Caco-2 (cell line): ENCODE measurements at regions of chr22 and their contacts with region 1.

Region 1: DNA sequence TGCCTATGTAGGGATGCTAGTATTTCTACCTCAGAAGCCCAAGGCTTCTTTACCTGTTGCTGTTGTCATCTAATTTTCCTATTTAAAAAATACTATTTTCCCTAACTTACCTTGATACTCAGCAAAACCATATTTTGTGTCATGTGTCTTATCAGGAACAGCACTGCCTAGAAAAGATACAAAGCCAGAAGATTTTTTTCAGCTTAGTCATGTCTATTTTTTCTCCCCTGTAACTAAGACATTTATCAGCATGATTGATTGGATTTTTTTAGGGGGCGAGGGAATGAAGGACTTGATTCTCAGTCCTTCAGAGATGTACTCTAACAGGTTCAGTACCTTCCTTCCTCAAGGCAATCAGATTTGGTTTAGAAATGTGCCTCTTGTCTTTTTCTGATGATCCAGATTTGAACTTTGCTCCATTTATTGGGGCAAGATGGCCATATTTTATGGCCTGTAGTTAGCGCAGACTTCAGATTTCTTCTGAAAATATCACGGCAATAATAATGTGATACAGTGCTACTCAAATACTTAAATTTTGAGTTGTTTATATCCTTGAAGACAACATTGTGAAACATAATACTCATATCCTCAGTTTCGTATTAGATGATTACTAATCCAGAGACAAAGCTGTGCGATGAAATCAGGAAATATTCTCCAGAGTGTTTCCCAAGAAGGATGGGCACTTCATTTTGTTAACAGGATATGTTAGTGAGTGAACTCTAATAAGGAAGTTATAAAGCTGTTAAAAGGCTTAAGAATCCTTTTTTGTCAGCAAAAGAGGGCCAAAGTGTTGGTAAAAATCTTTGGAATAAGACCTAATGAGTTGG is 3.8 kb upstream of the PIK3IP1 start:
- DNase-seq: no peak
- H3K4me3 ChIP-seq: no peak overlapping the region
- H3K4me3 Mint-ChIP-seq: no peak overlapping the region
- H3K27ac Mint-ChIP-seq: no peak overlapping the region
- H3K4me1 ChIP-seq: peaks cover 12% of the 10 kb centered on the region; the same call in 1 of the 2 replicates
- H3K4me1 Mint-ChIP-seq: peaks cover 26% of the 10 kb centered on the region
- H3K27me3 ChIP-seq: no peaks in the 10 kb centered on the region
- H3K27me3 Mint-ChIP-seq: no peaks in the 10 kb centered on the region
- CTCF ChIP-seq: no peak

Region 2: GRCh38 chr22:31148953-31149627 is 147.0 kb before region 1 on chr22:
- CTCF ChIA-PET with region 1: no interaction called
- POLR2A ChIA-PET with region 1: no interaction called
- intact Hi-C with region 1: no loop called
- DNase-seq: peak; percentile 81 to 82
- H3K4me3 ChIP-seq: no peak overlapping the region
- H3K4me3 Mint-ChIP-seq: no peak overlapping the region
- H3K27ac Mint-ChIP-seq: no peak overlapping the region
- H3K4me1 ChIP-seq: no peaks in the 10 kb centered on the region
- H3K4me1 Mint-ChIP-seq: no peaks in the 10 kb centered on the region
- H3K27me3 ChIP-seq: no peaks in the 10 kb centered on the region
- H3K27me3 Mint-ChIP-seq: no peaks in the 10 kb centered on the region
- CTCF ChIP-seq: peak; percentile 93 to 97

Region 3: GRCh38 chr22:31281733-31282132 is 14.3 kb before region 1 on chr22:
- CTCF ChIA-PET with region 1: no interaction called
- POLR2A ChIA-PET with region 1: no interaction called
- intact Hi-C with region 1: no loop called
- DNase-seq: no peak
- H3K4me3 ChIP-seq: no peak overlapping the region
- H3K4me3 Mint-ChIP-seq: no peak overlapping the region
- H3K27ac Mint-ChIP-seq: no peak overlapping the region
- H3K4me1 ChIP-seq: no peaks in the 10 kb centered on the region
- H3K4me1 Mint-ChIP-seq: no peaks in the 10 kb centered on the region
- H3K27me3 ChIP-seq: no peaks in the 10 kb centered on the region
- H3K27me3 Mint-ChIP-seq: no peaks in the 10 kb centered on the region
- CTCF ChIP-seq: no peak

Region 4: GRCh38 chr22:31313366-31314147 is 17.5 kb after region 1 on chr22:
- CTCF ChIA-PET with region 1: interaction called, 20 read pairs
- POLR2A ChIA-PET with region 1: interaction called, 11 read pairs
- intact Hi-C with region 1: loop called (anchors 1 kb)
- DNase-seq: peak; percentile 66 to 74
- H3K4me3 ChIP-seq: no peak overlapping the region
- H3K4me3 Mint-ChIP-seq: no peak overlapping the region
- H3K27ac Mint-ChIP-seq: peak overlapping the region; percentile 65
- H3K4me1 ChIP-seq: no peaks in the 10 kb centered on the region
- H3K4me1 Mint-ChIP-seq: peaks cover 7% of the 10 kb centered on the region
- H3K27me3 ChIP-seq: no peaks in the 10 kb centered on the region
- H3K27me3 Mint-ChIP-seq: no peaks in the 10 kb centered on the region
- CTCF ChIP-seq: peak; percentile 71 to 85